Naive thymus-derived CD8-positive, alpha-beta T cell (primary cell): ENCODE measurements at regions of chr6 and their contacts with region 1.

Region 1: GRCh38 chr6:35601331-35602132 is 87.2 kb downstream of the FKBP5 start:
- DNase-seq: peak; percentile 30 to 96 (median 82)
- ATAC-seq: peak; percentile 81 to 88
- H3K4me3 Mint-ChIP-seq: peak overlapping the region; percentile 76 to 98 (median 82)
- H3K27ac Mint-ChIP-seq: peak overlapping the region; percentile 87 to 100 (median 94)
- H3K4me1 Mint-ChIP-seq: peaks cover 33 to 85% (median 77%) of the 10 kb centered on the region in 4 donors
- H3K27me3 Mint-ChIP-seq: no peaks in the 10 kb centered on the region

Region 2: DNA sequence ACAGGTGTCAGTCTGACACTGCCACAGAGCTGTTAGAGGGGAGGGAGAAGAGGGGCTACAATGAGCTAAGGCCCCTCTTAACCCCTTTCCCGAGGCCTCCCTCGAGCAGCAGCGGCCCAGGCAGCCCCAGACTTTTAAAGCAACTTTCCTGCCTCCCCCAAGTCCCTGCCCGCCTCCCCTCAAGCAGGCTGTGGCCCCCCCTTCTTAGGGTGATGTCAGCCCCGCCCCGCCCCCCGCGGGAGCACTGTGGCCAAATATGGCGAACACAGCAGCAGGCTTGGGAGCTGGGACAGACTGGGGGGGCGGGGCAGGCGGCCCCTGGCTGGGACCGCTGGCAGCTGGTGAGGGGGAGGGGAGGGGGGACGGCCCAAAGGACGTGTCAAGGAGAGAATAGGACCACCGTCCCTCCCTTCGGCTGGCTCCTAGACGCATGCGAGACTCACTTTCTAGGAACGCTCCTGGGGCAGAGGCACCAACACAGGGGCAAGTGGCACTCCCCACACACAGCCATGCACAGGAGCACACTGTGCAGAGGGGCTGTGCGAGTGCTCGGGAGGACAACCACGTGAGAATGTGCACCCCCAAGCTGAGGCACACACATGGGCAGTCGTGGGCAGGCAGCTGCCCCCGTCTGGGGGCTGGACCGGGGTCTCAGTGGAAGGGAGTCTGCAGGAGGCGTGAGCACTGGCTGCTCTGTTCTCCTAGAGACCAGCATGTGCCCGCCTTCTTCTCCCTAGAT is 111.4 kb before region 1 on chr6:
- POLR2A ChIA-PET with region 1: no interaction called
- DNase-seq: peak in 1 of 10 donors; percentile 39
- ATAC-seq: peak; percentile 20 to 47
- H3K4me3 Mint-ChIP-seq: peak overlapping the region in 1 of 10 donors; percentile 62
- H3K27ac Mint-ChIP-seq: peak overlapping the region in 1 of 10 donors; percentile 68
- H3K4me1 Mint-ChIP-seq: peaks cover 7 to 29% (median 16%) of the 10 kb centered on the region in 4 donors
- H3K27me3 Mint-ChIP-seq: no peaks in the 10 kb centered on the region

Region 3: GRCh38 chr6:35583893-35584688 is 17.4 kb before region 1 on chr6:
- POLR2A ChIA-PET with region 1: interaction called, 230 read pairs
- DNase-seq: peak; percentile 58 to 85 (median 74)
- ATAC-seq: peak; percentile 66 to 69
- H3K4me3 Mint-ChIP-seq: peak overlapping the region in 7 of 10 donors; percentile 30 to 65 (median 57)
- H3K27ac Mint-ChIP-seq: peak overlapping the region; percentile 87 to 95 (median 90)
- H3K4me1 Mint-ChIP-seq: peaks cover 30 to 77% (median 60%) of the 10 kb centered on the region in 4 donors
- H3K27me3 Mint-ChIP-seq: no peaks in the 10 kb centered on the region

Region 4: DNA sequence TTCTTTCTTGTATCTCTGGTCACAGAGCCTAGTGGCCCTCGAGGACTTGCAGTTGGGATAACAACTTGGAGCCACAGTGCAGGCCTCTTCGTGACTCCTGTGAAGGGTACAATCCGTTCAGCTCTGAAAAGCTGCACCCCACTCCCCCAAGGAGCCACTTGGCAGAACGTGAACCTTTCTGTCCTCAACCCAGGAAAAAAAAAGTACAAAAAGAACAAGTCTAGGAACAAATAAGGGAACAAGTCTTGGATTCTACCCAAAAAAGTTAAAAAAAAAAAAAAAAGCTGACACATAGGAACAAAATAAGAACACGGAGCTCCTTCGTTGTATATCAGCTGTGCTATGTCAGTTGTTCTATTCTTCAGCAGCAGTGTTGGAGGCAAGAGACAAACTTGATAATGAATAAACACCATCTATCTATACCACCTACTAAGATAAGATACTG is 10.9 kb before region 1 on chr6:
- POLR2A ChIA-PET with region 1: interaction called, 230 read pairs
- DNase-seq: no peak
- ATAC-seq: no peak
- H3K4me3 Mint-ChIP-seq: peak overlapping the region in 9 of 10 donors; percentile 22 to 69 (median 44)
- H3K27ac Mint-ChIP-seq: peak overlapping the region; percentile 78 to 96 (median 94)
- H3K4me1 Mint-ChIP-seq: peaks cover 32 to 96% (median 91%) of the 10 kb centered on the region in 4 donors
- H3K27me3 Mint-ChIP-seq: no peaks in the 10 kb centered on the region

Region 5: GRCh38 chr6:35624341-35625070 is 23.0 kb after region 1 on chr6:
- POLR2A ChIA-PET with region 1: interaction called, 242 read pairs
- DNase-seq: peak in 4 of 10 donors; percentile 29 to 72 (median 66)
- ATAC-seq: peak; percentile 77 to 87
- H3K4me3 Mint-ChIP-seq: peak overlapping the region in 8 of 10 donors; percentile 7 to 52 (median 34)
- H3K27ac Mint-ChIP-seq: peak overlapping the region; percentile 76 to 93 (median 84)
- H3K4me1 Mint-ChIP-seq: peaks cover 15 to 61% (median 49%) of the 10 kb centered on the region in 4 donors
- H3K27me3 Mint-ChIP-seq: no peaks in the 10 kb centered on the region

Region 6: DNA sequence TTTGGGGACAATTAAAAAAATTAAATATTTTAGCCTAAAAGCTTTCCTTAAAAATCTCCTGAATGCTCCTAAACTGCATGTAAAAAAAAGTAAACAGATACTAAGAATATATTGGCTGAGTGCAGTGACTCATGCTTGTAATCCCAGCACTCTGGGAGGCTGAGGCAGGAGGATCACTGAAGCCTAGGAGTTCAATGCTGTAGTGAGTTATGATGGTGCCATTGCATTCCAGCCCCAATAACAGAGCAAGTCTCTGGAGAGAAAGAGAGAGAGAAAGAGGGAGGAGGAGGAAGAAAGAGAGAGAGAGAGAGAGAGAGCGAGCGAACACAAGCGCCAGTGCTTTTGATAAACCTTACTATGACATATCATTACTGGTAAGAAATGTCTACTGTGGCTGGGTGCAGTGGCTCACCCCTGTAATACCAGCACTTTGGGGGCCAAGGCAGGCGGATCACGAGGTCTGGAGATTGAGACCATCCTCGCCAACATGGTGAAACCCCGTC is 28.4 kb after region 1 on chr6:
- POLR2A ChIA-PET with region 1: interaction called, 242 read pairs
- DNase-seq: no peak
- ATAC-seq: no peak
- H3K4me3 Mint-ChIP-seq: no peak overlapping the region
- H3K27ac Mint-ChIP-seq: peak overlapping the region; percentile 11 to 87 (median 76)
- H3K4me1 Mint-ChIP-seq: peaks cover 10 to 39% (median 22%) of the 10 kb centered on the region in 4 donors
- H3K27me3 Mint-ChIP-seq: no peaks in the 10 kb centered on the region